AG04450 (cell line): ENCODE measurements at regions of chr18 and their contacts with region 1.

Region 1: GRCh38 chr18:62784966-62785413 is 69.6 kb downstream of the PHLPP1 start:
- DNase-seq: no peak
- H3K4me3 ChIP-seq: no peak overlapping the region
- H3K27ac ChIP-seq: no peak overlapping the region
- H3K27me3 ChIP-seq: no peaks in the 10 kb centered on the region
- CTCF ChIP-seq: no peak

Region 2: DNA sequence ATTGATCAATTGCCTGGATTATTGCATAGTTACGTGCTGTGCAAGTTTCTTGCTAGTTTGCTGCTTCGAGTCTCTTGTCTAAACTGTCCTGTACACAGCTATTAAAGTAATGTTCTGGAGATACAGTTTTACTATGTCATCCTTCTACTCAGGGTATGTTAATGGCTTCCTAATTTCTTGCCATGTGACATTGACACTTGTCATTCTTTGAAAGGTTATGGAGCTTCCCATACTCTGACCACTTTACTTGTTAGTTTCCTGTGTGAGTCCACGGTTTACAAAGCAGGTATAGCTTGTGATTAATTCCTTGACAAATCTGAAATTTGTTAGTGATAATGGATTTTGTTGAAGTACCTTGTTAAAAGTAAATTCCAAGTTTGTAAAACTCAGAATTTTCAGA is 10.8 kb after region 1 on chr18:
- CTCF ChIA-PET with region 1: no interaction called
- POLR2A ChIA-PET with region 1: interaction called, 15 read pairs
- DNase-seq: no peak
- H3K4me3 ChIP-seq: no peak overlapping the region
- H3K27ac ChIP-seq: no peak overlapping the region
- H3K27me3 ChIP-seq: no peaks in the 10 kb centered on the region
- CTCF ChIP-seq: no peak

Region 3: GRCh38 chr18:63098018-63098981 is 313.3 kb after region 1 on chr18:
- CTCF ChIA-PET with region 1: no interaction called
- POLR2A ChIA-PET with region 1: no interaction called
- DNase-seq: no peak
- H3K4me3 ChIP-seq: no peak overlapping the region
- H3K27ac ChIP-seq: no peak overlapping the region
- H3K27me3 ChIP-seq: no peaks in the 10 kb centered on the region
- CTCF ChIP-seq: no peak